ENCODE measurements at regions of chr7 and their contacts with region 1.

Region 1: DNA sequence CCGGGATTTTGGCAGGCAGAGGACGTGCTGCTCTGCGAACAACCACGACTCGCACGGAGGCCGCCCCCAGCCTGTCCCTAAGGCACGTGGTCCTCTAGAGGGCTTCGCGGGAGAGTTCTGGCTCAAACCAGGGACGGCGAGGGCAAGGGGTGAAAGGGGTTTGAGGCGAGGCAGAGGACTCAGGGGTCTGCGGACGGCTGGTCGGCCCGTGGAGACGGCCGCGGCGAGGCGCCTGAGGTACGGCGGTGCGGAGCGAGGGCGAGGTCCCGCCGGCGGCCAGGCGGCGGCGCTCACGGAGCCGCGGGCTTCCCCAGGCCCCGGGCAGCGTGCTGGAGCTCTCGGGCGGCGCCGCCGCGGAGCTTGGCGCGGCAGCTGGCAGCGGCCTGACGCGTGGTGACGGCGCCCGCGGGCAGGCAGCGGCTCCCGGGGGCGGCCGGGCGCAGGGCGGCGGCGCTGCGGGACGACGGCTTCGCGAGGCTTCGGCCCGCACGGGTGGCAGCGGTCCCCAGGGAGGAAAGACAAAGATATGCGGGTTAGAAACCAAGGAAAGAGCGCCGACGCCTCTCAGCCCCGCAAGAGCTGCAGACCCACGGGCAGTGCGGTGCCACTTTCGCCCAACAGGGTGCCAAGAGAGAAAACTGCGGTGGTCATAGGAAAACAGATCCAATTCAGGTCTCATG is 44.8 kb downstream of the ZNF800 start:
- DNase-seq: peak; percentile 68
- ATAC-seq: peak; percentile 99
- H3K4me3 Mint-ChIP-seq: peak overlapping the region; percentile 19
- H3K27ac Mint-ChIP-seq: no peak overlapping the region
- H3K4me1 Mint-ChIP-seq: peaks cover 15% of the 10 kb centered on the region
- H3K27me3 Mint-ChIP-seq: peaks cover 23% of the 10 kb centered on the region

Region 2: GRCh38 chr7:127366680-127367079 is 19.0 kb after region 1 on chr7:
- CTCF ChIA-PET with region 1: interaction called, 10 read pairs
- DNase-seq: no peak
- ATAC-seq: no peak
- H3K4me3 Mint-ChIP-seq: no peak overlapping the region
- H3K27ac Mint-ChIP-seq: no peak overlapping the region
- H3K4me1 Mint-ChIP-seq: peaks cover 10% of the 10 kb centered on the region
- H3K27me3 Mint-ChIP-seq: no peaks in the 10 kb centered on the region

Region 3: DNA sequence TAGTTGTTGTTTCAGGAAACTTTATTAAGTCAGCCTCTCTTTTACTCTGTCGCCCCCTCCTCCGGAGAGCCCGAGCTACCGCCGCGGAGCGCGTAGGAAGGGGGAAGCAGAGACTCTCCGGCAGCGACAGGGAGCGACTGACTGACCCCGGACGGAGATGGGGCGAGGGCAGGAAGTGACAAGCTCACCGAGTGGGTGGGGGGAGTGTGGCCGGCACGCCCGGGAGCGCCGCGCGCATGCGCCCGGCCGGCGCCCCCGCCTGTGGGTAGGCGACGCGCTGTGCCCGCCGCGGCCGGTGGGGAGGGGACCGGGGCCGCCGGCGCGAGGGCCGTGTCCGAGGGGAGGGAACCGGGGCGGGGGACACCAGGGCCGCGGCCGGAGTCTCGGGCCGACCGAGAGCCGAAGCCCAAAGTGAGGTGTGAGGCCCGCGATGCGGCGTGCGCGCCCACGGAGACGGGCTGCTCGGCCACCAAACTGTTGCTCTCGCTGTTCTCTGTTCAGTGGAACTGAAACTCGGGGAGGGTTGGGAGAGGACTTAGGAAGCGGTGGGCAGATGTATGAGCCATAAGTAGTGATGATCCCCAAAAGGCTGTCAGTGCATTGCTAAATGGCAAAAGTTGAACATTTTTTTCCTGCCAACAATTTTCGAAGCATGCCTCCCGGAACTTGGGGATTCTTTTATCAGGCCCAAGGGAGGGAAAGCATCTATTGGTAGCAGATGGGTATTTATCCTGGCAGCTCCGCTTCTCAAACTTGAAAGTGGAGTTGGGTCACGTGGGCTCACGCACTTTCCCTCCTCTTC is 45.1 kb after region 1 on chr7 and contains the start of gene ZNF800:
- CTCF ChIA-PET with region 1: interaction called, 13 read pairs
- DNase-seq: peak; percentile 92
- ATAC-seq: peak; percentile 87
- H3K4me3 Mint-ChIP-seq: peak within 1 kb of the TSS; percentile 87
- H3K27ac Mint-ChIP-seq: peak within 1 kb of the TSS; percentile 98
- H3K4me1 Mint-ChIP-seq: peaks cover 54% of the 10 kb centered on the region
- H3K27me3 Mint-ChIP-seq: no peaks in the 10 kb centered on the region
- total RNA-seq, gene ZNF800: 39.7 to 40.6 TPM

Region 4: GRCh38 chr7:127447326-127447945 is 99.7 kb after region 1 on chr7:
- CTCF ChIA-PET with region 1: interaction called, 47 read pairs
- DNase-seq: peak; percentile 75
- ATAC-seq: peak; percentile 100
- H3K4me3 Mint-ChIP-seq: no peak overlapping the region
- H3K27ac Mint-ChIP-seq: no peak overlapping the region
- H3K4me1 Mint-ChIP-seq: peaks cover 8% of the 10 kb centered on the region
- H3K27me3 Mint-ChIP-seq: peaks cover 45% of the 10 kb centered on the region